Gastrocnemius medialis (tissue), 4 donors: ENCODE measurements at regions of chr3 and their contacts with region 1.

Region 1: DNA sequence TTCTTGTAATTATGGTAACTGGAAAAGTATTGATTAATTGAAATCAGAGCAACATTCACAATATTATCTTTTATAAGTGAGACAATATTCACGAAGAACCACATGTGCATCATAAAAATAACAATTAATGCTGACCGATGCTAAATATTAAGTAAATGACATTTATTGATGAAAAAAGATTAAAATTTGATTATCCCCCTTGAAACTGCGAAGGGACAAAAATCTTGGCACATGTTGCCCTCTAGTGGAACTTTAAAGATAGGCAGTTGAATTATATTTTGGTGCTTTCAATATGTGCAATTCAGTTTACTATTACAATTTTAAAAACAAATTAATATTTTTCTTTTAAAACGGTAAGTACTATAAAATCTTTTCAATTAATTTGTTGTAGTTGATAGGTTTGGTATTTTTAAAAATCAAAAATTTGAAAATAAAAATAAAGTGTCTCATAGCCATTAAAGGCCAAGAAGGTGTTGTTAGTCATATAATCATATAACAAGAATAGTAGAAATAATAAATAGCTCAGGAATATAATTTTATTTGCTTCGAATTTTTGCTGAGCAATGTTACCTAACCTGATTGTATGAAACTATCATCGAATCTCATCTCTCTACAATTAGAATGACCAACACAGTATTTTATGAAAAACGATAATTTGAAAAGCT is 270.2 kb downstream of the ROBO1 start:
- DNase-seq: no peak
- ATAC-seq: no peak
- H3K4me3 ChIP-seq: no peak overlapping the region
- H3K27ac ChIP-seq: no peak overlapping the region
- H3K4me1 ChIP-seq: no peaks in the 10 kb centered on the region
- H3K27me3 ChIP-seq: no peaks in the 10 kb centered on the region
- CTCF ChIP-seq: peak in 3 of 5 experiments; percentile 22 to 62 (median 57)
- POLR2A ChIP-seq: no peak

Region 2: GRCh38 chr3:79086514-79086913 is 411.1 kb before region 1 on chr3:
- in situ Hi-C with region 1: loop called in 1 of 4 experiments (anchors 25 kb)
- intact Hi-C with region 1: no loop called
- DNase-seq: peak in 1 of 2 donors; percentile 11
- ATAC-seq: peak in 1 of 2 donors; percentile 62
- H3K4me3 ChIP-seq: peak overlapping the region in 1 of 4 donors; percentile 10
- H3K27ac ChIP-seq: no peak overlapping the region
- H3K4me1 ChIP-seq: no peaks in the 10 kb centered on the region
- H3K27me3 ChIP-seq: no peaks in the 10 kb centered on the region
- CTCF ChIP-seq: peak in 4 of 5 experiments; percentile 27 to 60 (median 48)
- POLR2A ChIP-seq: no peak

Region 3: GRCh38 chr3:79598594-79598993 is 101.0 kb after region 1 on chr3:
- in situ Hi-C with region 1: loop called in 1 of 4 experiments (anchors 25 kb)
- intact Hi-C with region 1: no loop called
- DNase-seq: no peak
- ATAC-seq: no peak
- H3K4me3 ChIP-seq: no peak overlapping the region
- H3K27ac ChIP-seq: no peak overlapping the region
- H3K4me1 ChIP-seq: no peaks in the 10 kb centered on the region
- H3K27me3 ChIP-seq: no peaks in the 10 kb centered on the region
- CTCF ChIP-seq: no peak
- POLR2A ChIP-seq: no peak